ENCODE measurements at regions of chr1 and their contacts with region 1.

Region 1: GRCh38 chr1:156480411-156481192 is 20.0 kb downstream of the MEF2D start:
- DNase-seq: peak; percentile 55 to 89 (median 85)
- ATAC-seq: peak; percentile 87
- H3K4me3 ChIP-seq: no peak overlapping the region
- H3K4me3 Mint-ChIP-seq: no peak overlapping the region
- H3K27ac ChIP-seq: peak overlapping the region; percentile 22 to 52
- H3K27ac Mint-ChIP-seq: peak overlapping the region; percentile 89
- H3K4me1 ChIP-seq: peaks cover 22% of the 10 kb centered on the region
- H3K4me1 Mint-ChIP-seq: peaks cover 47% of the 10 kb centered on the region
- H3K27me3 ChIP-seq: no peaks in the 10 kb centered on the region
- H3K27me3 Mint-ChIP-seq: no peaks in the 10 kb centered on the region
- CTCF ChIP-seq: peak; percentile 79

Region 2: DNA sequence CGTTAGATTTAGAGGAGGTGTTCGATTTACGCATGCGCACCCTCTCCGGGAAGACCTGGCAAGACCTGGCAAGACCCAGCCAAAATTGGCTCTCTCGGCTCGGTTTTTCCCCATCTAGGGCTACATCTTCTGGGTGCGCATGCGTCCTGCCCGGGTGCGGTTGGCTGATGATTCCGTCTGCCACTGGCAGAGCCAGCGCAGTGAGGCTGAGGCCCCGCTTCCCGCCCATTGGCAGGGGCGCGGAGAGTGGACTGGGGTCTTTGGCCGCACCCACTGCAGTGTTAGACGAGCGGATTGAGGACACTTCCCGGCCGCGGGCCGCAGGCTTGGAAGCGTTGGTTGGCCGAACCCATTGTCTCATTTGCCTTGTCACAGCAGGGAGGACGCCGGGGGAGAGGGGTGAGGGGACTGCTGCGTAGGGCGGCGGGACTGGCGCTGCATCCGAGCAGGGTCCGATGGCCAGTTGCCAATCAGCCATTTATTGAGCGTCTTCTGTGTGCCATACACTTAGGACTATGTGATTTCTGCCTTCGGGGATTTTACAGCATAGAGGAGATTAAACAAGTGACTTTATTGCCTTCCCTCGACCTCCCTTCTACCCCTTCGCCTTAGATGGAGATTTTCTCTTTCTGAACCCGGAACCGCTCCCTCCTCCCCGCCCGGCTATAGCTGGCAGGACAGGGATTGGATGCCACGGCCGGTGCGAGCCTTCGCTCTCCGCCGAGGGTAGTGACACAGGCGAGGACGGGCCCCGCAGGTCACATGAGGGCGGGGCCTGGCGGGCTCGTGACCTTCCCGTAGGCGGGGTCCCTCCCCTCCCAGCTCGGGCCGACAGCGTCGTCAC is 23.8 kb before region 1 on chr1:
- CTCF ChIA-PET with region 1: interaction called, 12 read pairs
- POLR2A ChIA-PET with region 1: interaction called, 3 read pairs
- intact Hi-C with region 1: loop called in 1 of 2 experiments (anchors 2 kb)
- DNase-seq: peak; percentile 92 to 99 (median 96)
- ATAC-seq: peak; percentile 84
- H3K4me3 ChIP-seq: peak overlapping the region; percentile 57 to 62
- H3K4me3 Mint-ChIP-seq: peak overlapping the region; percentile 93
- H3K27ac ChIP-seq: peak overlapping the region; percentile 83 to 89
- H3K27ac Mint-ChIP-seq: peak overlapping the region; percentile 100
- H3K4me1 ChIP-seq: peaks cover 4% of the 10 kb centered on the region
- H3K4me1 Mint-ChIP-seq: peaks cover 17% of the 10 kb centered on the region
- H3K27me3 ChIP-seq: no peaks in the 10 kb centered on the region
- H3K27me3 Mint-ChIP-seq: no peaks in the 10 kb centered on the region
- CTCF ChIP-seq: no peak

Region 3: DNA sequence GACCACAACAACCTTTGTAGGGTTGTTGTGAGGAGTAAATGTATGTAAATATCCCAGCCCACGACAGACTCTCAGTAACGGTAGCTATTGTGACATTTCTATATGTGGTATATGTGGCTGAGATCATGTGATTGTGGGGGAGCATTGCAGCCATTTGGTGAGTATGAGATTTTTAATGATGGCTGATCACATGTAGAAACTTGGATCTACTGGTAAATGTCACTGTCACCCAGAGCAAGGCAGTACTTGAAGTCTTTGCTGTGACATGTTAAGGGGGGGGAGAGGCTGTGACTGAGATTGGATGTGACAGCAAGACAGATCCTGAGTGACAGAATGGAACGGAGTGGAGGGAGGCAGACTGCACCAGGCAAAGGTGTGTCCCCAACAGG is 43.9 kb after region 1 on chr1:
- CTCF ChIA-PET with region 1: interaction called, 37 read pairs
- POLR2A ChIA-PET with region 1: interaction called, 5 read pairs
- intact Hi-C with region 1: loop called in 1 of 2 experiments (anchors 5 kb)
- DNase-seq: peak in 3 of 9 experiments; percentile 49 to 76 (median 59)
- ATAC-seq: peak; percentile 69
- H3K4me3 ChIP-seq: no peak overlapping the region
- H3K4me3 Mint-ChIP-seq: peak overlapping the region; percentile 40
- H3K27ac ChIP-seq: peak overlapping the region in 1 of 2 experiments; percentile 59
- H3K27ac Mint-ChIP-seq: peak overlapping the region; percentile 63
- H3K4me1 ChIP-seq: peaks cover 41% of the 10 kb centered on the region
- H3K4me1 Mint-ChIP-seq: peaks cover 44% of the 10 kb centered on the region
- H3K27me3 ChIP-seq: no peaks in the 10 kb centered on the region
- H3K27me3 Mint-ChIP-seq: no peaks in the 10 kb centered on the region
- CTCF ChIP-seq: no peak

Region 4: GRCh38 chr1:156549385-156549784 is 68.8 kb after region 1 on chr1:
- CTCF ChIA-PET with region 1: interaction called, 9 read pairs
- POLR2A ChIA-PET with region 1: no interaction called
- intact Hi-C with region 1: loop called in 1 of 2 experiments (anchors 1 kb)
- DNase-seq: peak in 1 of 9 experiments; percentile 35
- ATAC-seq: no peak
- H3K4me3 ChIP-seq: no peak overlapping the region
- H3K4me3 Mint-ChIP-seq: no peak overlapping the region
- H3K27ac ChIP-seq: no peak overlapping the region
- H3K27ac Mint-ChIP-seq: no peak overlapping the region
- H3K4me1 ChIP-seq: no peaks in the 10 kb centered on the region
- H3K4me1 Mint-ChIP-seq: peaks cover 2% of the 10 kb centered on the region
- H3K27me3 ChIP-seq: no peaks in the 10 kb centered on the region
- H3K27me3 Mint-ChIP-seq: no peaks in the 10 kb centered on the region
- CTCF ChIP-seq: no peak

Region 5: GRCh38 chr1:156583821-156584622 is 103.4 kb after region 1 on chr1:
- CTCF ChIA-PET with region 1: interaction called, 25 read pairs
- POLR2A ChIA-PET with region 1: interaction called, 14 read pairs
- intact Hi-C with region 1: loop called (anchors 1 to 2 kb)
- DNase-seq: peak; percentile 52 to 89 (median 78)
- ATAC-seq: peak; percentile 53
- H3K4me3 ChIP-seq: peak overlapping the region in 1 of 2 experiments; percentile 8
- H3K4me3 Mint-ChIP-seq: peak overlapping the region; percentile 61
- H3K27ac ChIP-seq: peak overlapping the region in 1 of 2 experiments; percentile 85
- H3K27ac Mint-ChIP-seq: peak overlapping the region; percentile 81
- H3K4me1 ChIP-seq: peaks cover 28% of the 10 kb centered on the region
- H3K4me1 Mint-ChIP-seq: peaks cover 38% of the 10 kb centered on the region
- H3K27me3 ChIP-seq: no peaks in the 10 kb centered on the region
- H3K27me3 Mint-ChIP-seq: no peaks in the 10 kb centered on the region
- CTCF ChIP-seq: peak; percentile 80

Region 6: DNA sequence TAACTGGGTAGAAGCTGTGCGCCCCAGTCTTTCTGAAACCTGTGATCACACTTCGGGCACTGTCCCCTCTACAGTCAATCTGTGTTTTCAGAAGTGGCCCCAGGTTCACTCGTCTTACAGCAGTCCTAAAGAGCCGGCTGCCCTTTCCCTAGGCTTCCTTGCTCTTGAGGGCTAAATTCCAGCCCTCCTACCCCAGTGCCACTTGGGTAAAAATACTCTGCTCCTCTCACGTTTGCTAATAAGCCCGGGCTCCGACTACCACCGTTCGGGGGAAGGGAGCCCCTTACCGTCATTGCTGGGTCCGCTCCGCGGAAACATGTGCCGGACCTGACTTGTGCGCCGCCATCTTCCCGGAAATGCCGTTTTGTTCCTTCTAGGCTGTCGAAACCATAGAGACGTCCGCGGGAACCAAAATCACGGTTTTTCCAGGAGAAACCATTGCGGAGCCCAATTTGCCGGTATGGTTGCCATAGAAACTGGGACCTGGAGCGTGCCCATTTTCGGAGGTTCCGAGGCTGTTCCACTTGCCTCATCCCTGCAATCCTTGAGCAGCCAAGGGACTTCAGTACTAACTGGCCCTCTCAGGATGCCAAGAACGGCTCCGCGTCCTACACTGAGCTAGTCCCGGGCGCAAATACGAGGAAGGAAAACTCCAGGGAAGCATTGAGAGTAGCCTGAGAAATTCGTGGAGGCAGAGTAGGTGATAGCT is 120.7 kb after region 1 on chr1 and contains the start of gene GPATCH4:
- CTCF ChIA-PET with region 1: interaction called, 12 read pairs
- POLR2A ChIA-PET with region 1: interaction called, 3 read pairs
- intact Hi-C with region 1: no loop called
- DNase-seq: peak in 8 of 9 experiments; percentile 61 to 86 (median 72)
- ATAC-seq: peak; percentile 80
- H3K4me3 ChIP-seq: peak within 1 kb of the TSS; percentile 65 to 70
- H3K4me3 Mint-ChIP-seq: peak within 1 kb of the TSS; percentile 98
- H3K27ac ChIP-seq: peak within 1 kb of the TSS; percentile 57 to 80
- H3K27ac Mint-ChIP-seq: peak within 1 kb of the TSS; percentile 98
- H3K4me1 ChIP-seq: peaks cover 24% of the 10 kb centered on the region
- H3K4me1 Mint-ChIP-seq: peaks cover 34% of the 10 kb centered on the region
- H3K27me3 ChIP-seq: no peaks in the 10 kb centered on the region
- H3K27me3 Mint-ChIP-seq: no peaks in the 10 kb centered on the region
- CTCF ChIP-seq: no peak
- total RNA-seq, gene GPATCH4: 46.4 to 46.7 TPM

Region 7: DNA sequence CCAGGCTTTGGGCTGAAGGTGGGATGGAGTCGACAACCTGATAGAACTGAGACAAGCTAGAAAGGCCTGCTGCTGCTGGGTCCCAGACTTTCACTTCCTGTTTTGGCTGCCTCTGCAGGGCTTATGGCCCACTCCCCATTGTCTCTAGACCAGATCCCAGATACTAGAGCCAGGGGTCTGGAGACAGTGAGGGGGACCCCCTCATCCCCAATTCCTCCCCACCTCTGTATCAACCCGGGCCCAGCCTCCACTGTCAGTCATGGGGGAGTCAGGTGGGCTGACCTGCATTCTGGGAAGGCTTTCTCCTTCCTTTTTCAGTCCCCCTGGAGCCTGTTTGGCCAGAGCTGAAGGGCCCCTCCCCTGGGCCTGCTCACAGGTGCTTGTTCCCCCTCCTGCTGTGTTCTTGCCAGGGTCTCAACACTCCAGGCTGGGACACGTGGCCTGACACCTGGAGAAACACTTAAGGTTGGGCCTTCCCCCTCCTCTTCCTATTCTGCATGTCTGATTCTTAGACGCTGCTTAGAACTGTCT is 637.0 kb after region 1 on chr1:
- CTCF ChIA-PET with region 1: no interaction called
- POLR2A ChIA-PET with region 1: no interaction called
- intact Hi-C with region 1: no loop called
- DNase-seq: peak in 1 of 9 experiments; percentile 17
- ATAC-seq: no peak
- H3K4me3 ChIP-seq: no peak overlapping the region
- H3K4me3 Mint-ChIP-seq: no peak overlapping the region
- H3K27ac ChIP-seq: no peak overlapping the region
- H3K27ac Mint-ChIP-seq: no peak overlapping the region
- H3K4me1 ChIP-seq: no peaks in the 10 kb centered on the region
- H3K4me1 Mint-ChIP-seq: peaks cover 9% of the 10 kb centered on the region
- H3K27me3 ChIP-seq: no peaks in the 10 kb centered on the region
- H3K27me3 Mint-ChIP-seq: peaks cover 2% of the 10 kb centered on the region
- CTCF ChIP-seq: no peak

Measured in CD8-positive, alpha-beta T cell (primary cell).